CD4-positive, alpha-beta memory T cell (primary cell): ENCODE measurements at regions of chr6 and their contacts with region 1.

Region 1: GRCh38 chr6:111709615-111710398 is 104.1 kb upstream of the TRAF3IP2 start:
- DNase-seq: peak; percentile 74 to 79 (median 76)
- H3K4me3 ChIP-seq: no peak overlapping the region
- H3K4me3 Mint-ChIP-seq: peak overlapping the region; percentile 26 to 82 (median 44)
- H3K27ac ChIP-seq: peak overlapping the region; percentile 42
- H3K27ac Mint-ChIP-seq: peak overlapping the region; percentile 91 to 97 (median 95)
- H3K4me1 ChIP-seq: peaks cover 51% of the 10 kb centered on the region
- H3K4me1 Mint-ChIP-seq: peaks cover 40 to 60% (median 48%) of the 10 kb centered on the region in 4 donors
- H3K27me3 ChIP-seq: no peaks in the 10 kb centered on the region
- H3K27me3 Mint-ChIP-seq: no peaks in the 10 kb centered on the region

Region 2: GRCh38 chr6:111737065-111737521 is 27.3 kb after region 1 on chr6:
- CTCF ChIA-PET with region 1: interaction called, 10 read pairs
- POLR2A ChIA-PET with region 1: no interaction called
- intact Hi-C with region 1: no loop called
- DNase-seq: peak in 1 of 5 donors; percentile 78
- H3K4me3 ChIP-seq: no peak overlapping the region
- H3K4me3 Mint-ChIP-seq: peak overlapping the region in 7 of 8 donors; percentile 32 to 81 (median 69)
- H3K27ac ChIP-seq: peak overlapping the region; percentile 32
- H3K27ac Mint-ChIP-seq: peak overlapping the region; percentile 87 to 97 (median 93)
- H3K4me1 ChIP-seq: peaks cover 100% of the 10 kb centered on the region
- H3K4me1 Mint-ChIP-seq: peaks cover 74 to 100% (median 86%) of the 10 kb centered on the region in 4 donors
- H3K27me3 ChIP-seq: no peaks in the 10 kb centered on the region
- H3K27me3 Mint-ChIP-seq: no peaks in the 10 kb centered on the region

Region 3: DNA sequence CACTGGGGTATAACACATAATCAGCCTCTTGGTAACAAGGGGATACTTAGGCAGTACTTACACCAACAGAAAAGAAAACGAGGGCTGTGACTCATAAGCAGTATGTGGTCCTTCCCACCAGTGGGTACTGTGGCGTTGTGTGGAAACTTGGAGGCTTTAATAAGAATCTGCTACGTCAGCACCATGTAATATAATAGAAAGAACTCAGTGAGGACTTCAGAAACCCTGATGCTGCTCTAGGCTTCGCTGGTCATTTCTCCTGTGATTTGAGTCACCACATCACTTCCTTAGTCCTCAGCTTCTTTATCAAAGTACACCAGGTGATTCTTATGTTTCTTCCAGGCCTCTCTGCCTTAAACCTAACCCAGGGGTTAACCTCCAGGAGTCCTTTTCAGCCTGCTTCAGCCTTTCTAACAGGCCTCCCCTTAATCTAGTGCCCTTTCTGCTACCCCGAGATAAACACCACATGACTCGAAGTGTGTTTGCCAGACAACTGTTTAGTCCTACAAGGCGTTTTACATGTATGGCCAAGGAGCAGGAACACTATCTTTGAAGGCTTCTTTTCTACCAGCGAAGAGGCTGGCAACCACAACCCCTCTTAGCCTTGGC is 94.9 kb after region 1 on chr6:
- CTCF ChIA-PET with region 1: interaction called, 21 read pairs
- POLR2A ChIA-PET with region 1: interaction called, 5 read pairs
- intact Hi-C with region 1: loop called (anchors 1 kb)
- DNase-seq: peak; percentile 70 to 90 (median 74)
- H3K4me3 ChIP-seq: peak overlapping the region in 1 of 2 donors; percentile 15
- H3K4me3 Mint-ChIP-seq: peak overlapping the region; percentile 34 to 86 (median 72)
- H3K27ac ChIP-seq: peak overlapping the region; percentile 77
- H3K27ac Mint-ChIP-seq: peak overlapping the region; percentile 94 to 99 (median 96)
- H3K4me1 ChIP-seq: peaks cover 98% of the 10 kb centered on the region
- H3K4me1 Mint-ChIP-seq: peaks cover 64 to 98% (median 84%) of the 10 kb centered on the region in 4 donors
- H3K27me3 ChIP-seq: no peaks in the 10 kb centered on the region
- H3K27me3 Mint-ChIP-seq: no peaks in the 10 kb centered on the region

Region 4: GRCh38 chr6:111997078-111997852 is 287.5 kb after region 1 on chr6:
- CTCF ChIA-PET with region 1: interaction called, 62 read pairs
- POLR2A ChIA-PET with region 1: interaction called, 15 read pairs
- intact Hi-C with region 1: loop called (anchors 1 kb)
- DNase-seq: peak; percentile 76 to 79 (median 78)
- H3K4me3 ChIP-seq: peak overlapping the region in 1 of 2 donors; percentile 21
- H3K4me3 Mint-ChIP-seq: peak overlapping the region; percentile 64 to 85 (median 80)
- H3K27ac ChIP-seq: no peak overlapping the region
- H3K27ac Mint-ChIP-seq: peak overlapping the region; percentile 76 to 90 (median 85)
- H3K4me1 ChIP-seq: peaks cover 38% of the 10 kb centered on the region
- H3K4me1 Mint-ChIP-seq: peaks cover 39 to 47% (median 42%) of the 10 kb centered on the region in 4 donors
- H3K27me3 ChIP-seq: no peaks in the 10 kb centered on the region
- H3K27me3 Mint-ChIP-seq: no peaks in the 10 kb centered on the region

Region 5: GRCh38 chr6:112029045-112029822 is 319.4 kb after region 1 on chr6:
- CTCF ChIA-PET with region 1: interaction called, 6 read pairs
- POLR2A ChIA-PET with region 1: interaction called, 8 read pairs
- intact Hi-C with region 1: loop called (anchors 1 kb)
- DNase-seq: peak; percentile 36 to 62 (median 43)
- H3K4me3 ChIP-seq: no peak overlapping the region
- H3K4me3 Mint-ChIP-seq: peak overlapping the region in 7 of 8 donors; percentile 35 to 91 (median 74)
- H3K27ac ChIP-seq: peak overlapping the region; percentile 61
- H3K27ac Mint-ChIP-seq: peak overlapping the region; percentile 84 to 98 (median 94)
- H3K4me1 ChIP-seq: peaks cover 76% of the 10 kb centered on the region
- H3K4me1 Mint-ChIP-seq: peaks cover 55 to 79% (median 68%) of the 10 kb centered on the region in 4 donors
- H3K27me3 ChIP-seq: no peaks in the 10 kb centered on the region
- H3K27me3 Mint-ChIP-seq: no peaks in the 10 kb centered on the region